Transverse colon (tissue), 4 donors: ENCODE measurements at regions of chr11 and their contacts with region 1.

Region 1: DNA sequence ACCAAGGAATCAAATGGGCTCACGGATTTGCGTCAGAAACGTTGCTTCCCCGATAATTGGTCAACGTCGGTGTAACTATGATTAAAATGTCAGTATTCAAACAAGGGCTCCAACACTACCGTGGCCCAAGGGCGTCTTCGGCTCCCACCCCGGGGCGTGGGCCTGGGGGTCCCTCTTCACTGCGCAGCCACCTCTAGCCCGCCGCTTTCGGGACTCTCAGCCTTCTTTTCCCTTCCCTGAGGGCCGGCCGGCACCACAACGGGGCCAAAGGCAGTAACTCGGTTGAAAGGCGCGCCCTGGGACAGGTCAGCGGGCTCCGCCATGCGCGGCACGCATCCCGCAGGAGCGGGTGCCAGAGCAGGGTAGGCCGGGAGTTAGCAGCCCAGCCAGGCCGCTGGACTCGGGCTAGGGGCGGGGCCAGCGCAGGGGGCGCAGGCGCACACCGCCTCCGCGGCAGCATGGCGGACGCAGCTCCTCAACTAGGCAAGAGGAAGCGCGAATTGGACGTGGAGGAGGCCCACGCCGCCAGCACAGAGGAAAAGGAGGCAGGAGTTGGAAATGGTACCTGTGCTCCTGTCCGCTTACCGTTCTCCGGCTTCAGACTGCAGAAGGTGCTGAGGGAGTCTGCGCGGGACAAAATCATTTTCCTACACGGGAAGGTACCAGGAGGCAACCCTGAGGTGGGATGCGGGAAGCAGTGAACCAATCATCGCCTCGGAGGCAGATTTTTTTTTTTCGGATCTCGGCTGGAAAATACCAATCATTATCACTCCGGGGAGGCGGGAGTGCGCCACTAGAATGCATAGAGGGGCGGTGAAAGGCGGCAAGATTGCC is at the start of gene DCPS:
- DNase-seq: peak; percentile 92
- H3K4me3 ChIP-seq: peak within 1 kb of the TSS; percentile 32 to 68 (median 50)
- H3K27ac ChIP-seq: peak within 1 kb of the TSS; percentile 85 to 93 (median 88)
- H3K4me1 ChIP-seq: peaks cover 4 to 21% (median 11%) of the 10 kb centered on the region in 4 donors
- H3K27me3 ChIP-seq: no peaks in the 10 kb centered on the region
- CTCF ChIP-seq: no peak
- EP300 ChIP-seq: no peak
- POLR2A ChIP-seq: peak; percentile 82
- total RNA-seq, gene DCPS: 0.40 to 13.7 (median 11.3) TPM

Region 2: GRCh38 chr11:126416542-126417090 is 112.8 kb after region 1 on chr11:
- in situ Hi-C with region 1: loop called in 1 of 4 experiments (anchors 25 kb)
- intact Hi-C with region 1: no loop called
- DNase-seq: peak; percentile 90
- H3K4me3 ChIP-seq: peak overlapping the region; percentile 6 to 47 (median 39)
- H3K27ac ChIP-seq: peak overlapping the region; percentile 77 to 86 (median 82)
- H3K4me1 ChIP-seq: peaks cover 18 to 52% (median 36%) of the 10 kb centered on the region in 4 donors
- H3K27me3 ChIP-seq: no peaks in the 10 kb centered on the region
- CTCF ChIP-seq: no peak
- EP300 ChIP-seq: no peak
- POLR2A ChIP-seq: peak; percentile 38

Region 3: DNA sequence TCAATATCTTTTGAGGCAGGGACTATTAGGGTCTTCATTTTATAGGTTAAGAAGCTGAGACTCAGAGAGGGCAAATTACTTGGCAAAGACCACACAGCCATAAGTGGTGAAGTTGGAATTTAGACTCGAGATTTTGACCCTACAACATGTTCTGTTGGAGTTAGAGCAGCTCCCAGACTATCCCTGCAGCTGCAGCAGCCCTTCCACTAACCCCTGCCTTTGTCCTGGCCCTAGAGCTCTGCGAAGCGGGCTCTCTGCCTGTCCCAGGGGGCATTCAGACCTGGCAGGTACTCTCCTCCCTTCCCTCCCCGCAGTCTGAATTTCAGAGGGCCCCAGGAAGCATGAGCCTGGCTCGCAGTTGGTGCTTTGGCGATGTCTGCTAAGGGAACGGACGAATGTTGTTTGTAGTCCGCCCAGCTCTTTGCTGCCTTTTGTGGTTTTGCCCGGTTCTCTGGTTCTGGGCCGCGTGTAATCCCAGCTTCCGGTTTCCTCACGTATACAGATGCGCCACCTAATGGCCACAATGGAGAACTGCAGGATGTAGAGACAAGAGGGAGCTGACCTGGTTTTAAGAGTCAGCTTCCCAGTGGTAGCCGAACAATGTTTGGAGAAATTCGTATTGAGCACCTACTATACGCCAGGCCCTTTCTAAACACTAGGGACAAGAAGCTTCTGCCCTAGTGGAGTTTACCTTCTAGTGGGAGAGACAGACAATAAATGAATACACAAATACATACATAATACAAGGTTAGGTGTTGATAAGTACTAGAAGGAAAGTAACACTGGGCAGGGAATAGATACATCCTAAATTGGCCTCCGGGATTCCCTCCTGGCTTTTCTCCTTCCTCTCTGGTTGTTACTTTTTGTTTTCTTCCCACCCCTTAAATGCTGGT is 176.8 kb after region 1 on chr11:
- in situ Hi-C with region 1: loop called in 1 of 4 experiments (anchors 25 kb)
- intact Hi-C with region 1: no loop called
- DNase-seq: peak; percentile 83
- H3K4me3 ChIP-seq: no peak overlapping the region
- H3K27ac ChIP-seq: peak overlapping the region; percentile 47 to 73 (median 58)
- H3K4me1 ChIP-seq: peaks cover 5 to 15% (median 5%) of the 10 kb centered on the region in 4 donors
- H3K27me3 ChIP-seq: peaks cover 59% of the 10 kb centered on the region
- CTCF ChIP-seq: peak; percentile 92 to 96 (median 95)
- EP300 ChIP-seq: no peak
- POLR2A ChIP-seq: no peak